H1 (cell line): ENCODE measurements at regions of chr2 and their contacts with region 1.

Region 1: GRCh38 chr2:60320724-60321123 is 232.7 kb downstream of the BCL11A start:
- DNase-seq: no peak
- H3K4me3 ChIP-seq: no peak overlapping the region
- H3K27ac ChIP-seq: no peak overlapping the region
- H3K4me1 ChIP-seq: peaks cover 0 to 7% (median 4%) of the 10 kb centered on the region in 4 experiments; a peak in 4 of 7 replicates
- H3K27me3 ChIP-seq: no peaks in the 10 kb centered on the region
- CTCF ChIP-seq: no peak
- EP300 ChIP-seq: no peak
- POLR2A ChIP-seq: no peak
- RAD21 ChIP-seq: no peak

Region 2: DNA sequence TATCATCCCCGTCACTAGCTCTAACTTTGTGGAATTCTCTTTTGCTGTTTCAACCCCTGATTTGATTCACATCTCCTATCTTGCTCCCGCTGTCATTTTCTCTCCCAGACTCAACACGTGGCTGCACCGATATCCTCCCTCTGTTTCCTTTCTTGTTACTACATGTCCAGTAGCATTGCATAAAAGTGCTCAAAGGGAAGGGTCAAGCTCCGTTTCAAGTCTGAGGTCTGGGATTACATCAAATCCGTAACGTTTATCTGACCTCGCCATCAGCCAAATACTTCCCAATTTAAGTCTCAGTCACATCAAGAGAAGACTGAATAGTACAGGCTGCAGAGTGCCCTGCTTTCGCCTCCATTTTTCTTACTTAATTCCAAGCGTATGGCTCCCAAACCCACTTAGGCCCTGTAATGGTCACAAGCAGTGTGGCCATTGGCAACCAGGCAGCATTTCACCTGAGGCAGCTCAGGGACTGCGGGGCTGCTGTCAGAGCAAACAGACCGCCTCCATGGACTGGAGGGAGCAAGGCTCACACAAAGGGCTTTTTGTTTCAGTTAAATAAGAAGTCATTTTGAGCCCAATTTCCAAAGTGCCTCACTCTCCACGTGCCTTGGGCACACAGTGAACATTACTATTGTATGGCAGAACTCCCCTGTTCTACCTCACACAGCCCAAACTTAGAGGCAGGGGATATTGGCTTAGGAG is 15.0 kb after region 1 on chr2:
- CTCF ChIA-PET with region 1: interaction called, 11 read pairs
- POLR2A ChIA-PET with region 1: no interaction called
- DNase-seq: no peak
- H3K4me3 ChIP-seq: no peak overlapping the region
- H3K27ac ChIP-seq: no peak overlapping the region
- H3K4me1 ChIP-seq: no peaks in the 10 kb centered on the region
- H3K27me3 ChIP-seq: no peaks in the 10 kb centered on the region
- CTCF ChIP-seq: no peak
- EP300 ChIP-seq: no peak
- POLR2A ChIP-seq: no peak
- RAD21 ChIP-seq: no peak

Region 3: GRCh38 chr2:60456115-60456770 is 135.5 kb after region 1 on chr2:
- CTCF ChIA-PET with region 1: no interaction called
- POLR2A ChIA-PET with region 1: no interaction called
- DNase-seq: no peak
- H3K4me3 ChIP-seq: no peak overlapping the region
- H3K27ac ChIP-seq: no peak overlapping the region
- H3K4me1 ChIP-seq: peaks cover 5 to 28% (median 19%) of the 10 kb centered on the region in 4 experiments
- H3K27me3 ChIP-seq: no peaks in the 10 kb centered on the region
- CTCF ChIP-seq: peak in 1 of 3 experiments; percentile 32; a peak in 1 of 4 replicates
- EP300 ChIP-seq: no peak
- POLR2A ChIP-seq: no peak
- RAD21 ChIP-seq: peak in 1 of 2 experiments; percentile 27; a peak in 2 of 4 replicates